ENCODE measurements at regions of chr4 and their contacts with region 1.

Region 1: GRCh38 chr4:6907658-6908191 is 1.9 kb upstream of the TBC1D14 start:
- DNase-seq: no peak
- H3K4me3 ChIP-seq: no peak overlapping the region
- H3K27me3 ChIP-seq: peaks cover 3% of the 10 kb centered on the region; the same call in 1 of the 2 replicates
- CTCF ChIP-seq: peak; percentile 52

Region 2: GRCh38 chr4:6402566-6403398 is 504.9 kb before region 1 on chr4:
- CTCF ChIA-PET with region 1: no interaction called
- POLR2A ChIA-PET with region 1: no interaction called
- DNase-seq: no peak
- H3K4me3 ChIP-seq: no peak overlapping the region
- H3K27me3 ChIP-seq: peaks cover 8% of the 10 kb centered on the region
- CTCF ChIP-seq: no peak

Region 3: DNA sequence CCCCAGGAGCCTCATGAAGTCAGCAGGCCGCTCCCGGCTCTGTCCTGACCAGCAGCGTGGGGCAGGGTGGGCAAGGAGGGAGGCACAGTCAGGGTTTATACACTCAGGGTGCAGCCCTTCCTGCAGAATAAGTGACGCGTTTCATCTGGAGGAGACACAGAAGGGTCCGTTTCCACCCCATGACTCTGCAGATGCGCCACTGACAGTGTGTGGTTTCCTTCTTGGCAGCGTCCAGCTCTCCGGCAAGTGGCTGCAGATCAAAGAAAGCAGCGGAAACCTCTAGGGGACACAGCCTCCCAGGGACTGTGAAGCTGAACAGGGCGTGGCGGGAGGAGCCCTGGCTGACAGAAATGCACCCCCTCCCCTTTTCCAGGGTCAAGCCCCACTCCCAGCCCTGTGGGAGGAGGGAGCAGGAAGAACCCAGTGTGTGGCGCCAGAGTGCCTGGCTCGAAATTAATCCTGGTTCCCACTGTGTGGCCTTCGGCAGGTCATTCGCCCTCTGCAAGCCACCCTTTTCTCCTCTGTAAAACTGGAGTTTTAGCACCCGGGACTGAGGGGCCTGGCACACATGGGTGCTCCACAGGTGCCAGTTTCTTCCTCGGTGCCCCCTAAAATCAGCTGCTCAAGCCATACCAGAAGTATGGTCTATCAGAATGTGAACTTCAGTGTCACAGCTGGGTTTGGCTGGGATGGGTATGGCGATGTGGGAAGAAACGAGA is 15.4 kb before region 1 on chr4:
- CTCF ChIA-PET with region 1: interaction called, 10 read pairs
- POLR2A ChIA-PET with region 1: no interaction called
- DNase-seq: no peak
- H3K4me3 ChIP-seq: no peak overlapping the region
- H3K27me3 ChIP-seq: no peaks in the 10 kb centered on the region
- CTCF ChIP-seq: peak; percentile 28; the same call in 1 of the 2 replicates

Region 4: DNA sequence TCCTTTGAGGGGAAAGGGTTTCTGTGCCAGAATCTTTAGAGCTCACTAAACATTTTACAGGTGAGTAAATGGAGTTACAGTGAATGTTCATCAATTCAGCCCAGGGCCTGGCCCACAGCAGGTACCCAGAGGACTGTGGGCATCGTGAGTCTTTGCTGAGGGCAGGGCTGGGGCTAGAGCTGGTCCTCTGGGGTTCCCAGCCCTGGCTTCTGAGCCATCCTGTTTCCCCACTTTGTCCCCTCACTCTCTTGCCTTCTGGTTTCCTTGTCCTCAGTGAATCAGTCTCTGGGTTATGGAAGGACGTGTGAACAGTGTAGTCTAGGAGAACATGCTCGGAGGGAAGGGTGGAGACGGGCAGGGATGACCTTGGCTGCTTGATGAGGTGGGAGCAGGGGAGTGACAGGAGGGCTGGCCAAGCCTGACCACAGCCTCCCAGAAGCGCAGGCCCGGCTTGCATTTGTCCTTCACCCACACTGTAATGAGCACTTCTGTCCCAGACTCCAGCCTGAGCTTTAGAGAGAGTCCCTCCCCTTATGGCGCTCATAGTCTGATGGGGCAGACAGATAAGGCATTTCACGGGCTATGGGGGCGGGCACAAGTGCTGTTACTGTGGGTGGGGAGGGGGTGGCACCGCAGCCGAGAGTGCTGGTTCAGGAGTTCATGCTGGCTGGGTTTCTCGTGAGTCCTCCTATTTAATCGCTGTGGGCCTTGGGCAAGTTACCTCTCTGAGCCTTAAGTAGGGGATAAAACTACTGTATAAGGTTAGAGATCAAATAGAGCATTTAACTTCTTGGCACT is 19.2 kb after region 1 on chr4:
- CTCF ChIA-PET with region 1: interaction called, 5 read pairs
- POLR2A ChIA-PET with region 1: interaction called, 20 read pairs
- DNase-seq: no peak
- H3K4me3 ChIP-seq: no peak overlapping the region
- H3K27me3 ChIP-seq: no peaks in the 10 kb centered on the region
- CTCF ChIP-seq: no peak

Measured in BJ (cell line).